Caco-2 (cell line): ENCODE measurements at regions of chr17 and their contacts with region 1.

Region 1: DNA sequence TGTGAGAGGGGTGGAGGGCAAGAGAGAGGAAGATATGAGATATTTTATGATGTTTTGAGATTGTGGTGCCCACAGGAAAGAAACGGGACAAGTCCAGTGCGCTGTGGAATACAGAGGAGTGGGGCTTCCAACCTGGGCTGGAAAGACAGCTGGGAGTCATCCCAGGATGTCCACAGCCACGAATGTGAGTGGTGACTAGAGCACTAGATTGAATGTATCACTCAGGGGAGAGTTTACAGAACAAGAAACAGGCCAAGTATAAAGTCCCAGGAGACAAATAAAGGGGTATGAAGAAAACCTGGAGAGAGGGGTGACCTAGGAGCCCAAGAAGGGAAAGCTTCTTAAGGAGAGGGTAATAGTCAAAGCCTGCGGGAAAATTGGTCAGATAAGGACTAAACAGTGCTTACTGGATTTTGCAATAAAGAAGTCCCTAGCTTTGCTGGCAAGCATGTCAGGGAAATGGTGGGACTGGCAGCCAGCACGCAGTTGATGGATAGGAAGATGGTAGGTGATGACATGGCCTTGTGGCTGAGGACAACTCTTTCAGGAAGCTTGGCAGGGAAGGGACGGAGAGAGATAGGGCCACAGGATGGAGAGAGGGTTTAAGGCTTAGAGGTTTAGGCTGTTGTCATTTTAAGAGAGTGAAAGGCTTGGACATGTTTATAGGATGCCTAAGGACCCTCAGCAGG is 114.5 kb downstream of the AXIN2 start:
- DNase-seq: no peak
- H3K4me3 ChIP-seq: no peak overlapping the region
- H3K4me3 Mint-ChIP-seq: no peak overlapping the region
- H3K27ac Mint-ChIP-seq: no peak overlapping the region
- H3K4me1 ChIP-seq: no peaks in the 10 kb centered on the region
- H3K4me1 Mint-ChIP-seq: no peaks in the 10 kb centered on the region
- H3K27me3 ChIP-seq: no peaks in the 10 kb centered on the region
- H3K27me3 Mint-ChIP-seq: peaks cover 3% of the 10 kb centered on the region
- CTCF ChIP-seq: no peak

Region 2: GRCh38 chr17:63714547-63715277 is 1732.3 kb before region 1 on chr17:
- CTCF ChIA-PET with region 1: no interaction called
- POLR2A ChIA-PET with region 1: no interaction called
- intact Hi-C with region 1: loop called (anchors 10 kb)
- DNase-seq: no peak
- H3K4me3 ChIP-seq: no peak overlapping the region
- H3K4me3 Mint-ChIP-seq: no peak overlapping the region
- H3K27ac Mint-ChIP-seq: no peak overlapping the region
- H3K4me1 ChIP-seq: no peaks in the 10 kb centered on the region
- H3K4me1 Mint-ChIP-seq: no peaks in the 10 kb centered on the region
- H3K27me3 ChIP-seq: no peaks in the 10 kb centered on the region
- H3K27me3 Mint-ChIP-seq: no peaks in the 10 kb centered on the region
- CTCF ChIP-seq: no peak

Region 3: DNA sequence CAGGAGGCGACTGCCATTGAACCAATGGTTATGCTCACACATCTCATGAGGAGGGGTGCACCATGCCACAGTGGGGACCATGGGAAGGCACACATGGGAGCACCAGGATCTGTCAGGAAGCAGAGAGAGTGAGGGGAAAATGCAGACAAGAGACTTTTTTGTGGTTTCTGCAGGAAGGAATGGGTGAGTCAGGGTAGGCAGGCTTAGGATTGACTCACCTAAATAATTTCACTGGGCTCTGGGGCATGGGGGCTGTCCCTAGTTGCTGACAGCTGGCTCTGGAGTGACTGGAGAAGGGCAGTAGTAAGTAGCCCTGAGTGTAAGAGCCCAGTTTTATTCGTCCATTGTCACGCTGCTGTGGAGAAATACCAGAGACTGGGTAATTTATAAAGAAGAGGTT is 88.0 kb before region 1 on chr17:
- CTCF ChIA-PET with region 1: no interaction called
- POLR2A ChIA-PET with region 1: no interaction called
- intact Hi-C with region 1: no loop called
- DNase-seq: no peak
- H3K4me3 ChIP-seq: no peak overlapping the region
- H3K4me3 Mint-ChIP-seq: no peak overlapping the region
- H3K27ac Mint-ChIP-seq: no peak overlapping the region
- H3K4me1 ChIP-seq: no peaks in the 10 kb centered on the region
- H3K4me1 Mint-ChIP-seq: no peaks in the 10 kb centered on the region
- H3K27me3 ChIP-seq: no peaks in the 10 kb centered on the region
- H3K27me3 Mint-ChIP-seq: peaks cover 10% of the 10 kb centered on the region
- CTCF ChIP-seq: no peak

Region 4: DNA sequence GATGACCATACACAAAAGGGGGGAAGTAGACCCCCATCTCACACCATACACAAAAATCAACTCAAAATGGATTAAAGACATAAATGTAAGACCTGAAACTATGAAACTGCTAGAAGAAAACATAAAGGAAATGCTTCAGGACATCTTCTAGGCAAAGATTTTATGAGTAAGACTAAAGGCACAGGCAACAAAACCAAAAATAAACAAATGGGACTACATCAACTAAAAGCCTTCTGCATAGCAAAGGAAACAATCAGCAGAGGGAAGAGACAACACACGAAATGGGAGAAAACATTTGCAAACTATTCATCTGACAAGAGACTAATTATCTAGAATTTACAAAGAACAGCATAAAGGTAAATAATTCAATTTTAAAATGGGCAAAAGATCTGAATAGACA is 37.6 kb before region 1 on chr17:
- CTCF ChIA-PET with region 1: no interaction called
- POLR2A ChIA-PET with region 1: no interaction called
- intact Hi-C with region 1: no loop called
- DNase-seq: no peak
- H3K4me3 ChIP-seq: no peak overlapping the region
- H3K4me3 Mint-ChIP-seq: no peak overlapping the region
- H3K27ac Mint-ChIP-seq: no peak overlapping the region
- H3K4me1 ChIP-seq: no peaks in the 10 kb centered on the region
- H3K4me1 Mint-ChIP-seq: no peaks in the 10 kb centered on the region
- H3K27me3 ChIP-seq: no peaks in the 10 kb centered on the region
- H3K27me3 Mint-ChIP-seq: peaks cover 2% of the 10 kb centered on the region
- CTCF ChIP-seq: no peak

Region 5: DNA sequence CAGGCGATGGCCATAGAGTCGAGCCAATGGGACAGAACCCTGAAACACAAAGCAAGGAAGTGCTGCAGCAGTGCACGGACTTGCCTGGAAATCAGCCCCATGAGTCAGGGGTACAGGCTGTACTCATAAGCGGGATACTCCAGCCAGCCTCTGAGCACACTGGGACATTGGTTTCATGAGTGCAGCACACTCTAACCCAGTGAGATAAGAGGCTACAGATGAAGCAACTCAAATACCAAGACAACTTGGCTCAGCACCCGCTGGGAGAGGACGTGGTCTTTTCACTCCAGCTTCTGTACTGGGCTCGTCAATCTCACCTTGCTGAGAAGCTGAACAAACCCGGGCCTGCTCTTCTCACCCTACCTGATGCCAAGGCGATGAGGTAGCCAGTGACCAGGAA is 16.3 kb after region 1 on chr17:
- CTCF ChIA-PET with region 1: no interaction called
- POLR2A ChIA-PET with region 1: no interaction called
- intact Hi-C with region 1: no loop called
- DNase-seq: no peak
- H3K4me3 ChIP-seq: no peak overlapping the region
- H3K4me3 Mint-ChIP-seq: no peak overlapping the region
- H3K27ac Mint-ChIP-seq: no peak overlapping the region
- H3K4me1 ChIP-seq: peaks cover 10% of the 10 kb centered on the region
- H3K4me1 Mint-ChIP-seq: peaks cover 20% of the 10 kb centered on the region
- H3K27me3 ChIP-seq: no peaks in the 10 kb centered on the region
- H3K27me3 Mint-ChIP-seq: no peaks in the 10 kb centered on the region
- CTCF ChIP-seq: no peak